ENCODE measurements at regions of chr13 and their contacts with region 1.

Region 1: DNA sequence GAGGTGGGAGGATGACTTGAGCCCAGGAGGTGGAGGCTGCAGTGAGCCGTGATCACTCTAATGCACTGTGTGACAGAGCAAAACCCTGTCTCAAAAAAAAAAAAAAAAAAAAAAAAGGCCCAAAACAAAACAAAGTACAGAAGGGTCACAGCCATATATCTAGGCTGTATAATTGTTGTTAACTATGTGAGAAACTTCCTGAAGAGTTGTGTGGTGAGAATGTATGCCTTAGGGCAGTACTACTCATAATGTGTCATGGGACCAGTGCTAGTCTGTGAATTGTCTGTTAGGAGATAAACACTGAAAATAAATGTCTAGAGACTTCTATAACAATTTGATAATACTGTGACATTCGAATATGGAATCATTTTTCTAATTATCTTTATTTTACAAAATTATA is 43.1 kb downstream of the PAN3 start:
- DNase-seq: peak in 1 of 2 experiments; percentile 92
- H3K4me3 ChIP-seq: no peak overlapping the region; the same call in 1 of the 2 replicates
- H3K27ac ChIP-seq: peak overlapping the region; percentile 83
- H3K4me1 ChIP-seq: peaks cover 47% of the 10 kb centered on the region
- H3K27me3 ChIP-seq: no peaks in the 10 kb centered on the region
- CTCF ChIP-seq: no peak

Region 2: GRCh38 chr13:28138012-28138755 is 43.2 kb before region 1 on chr13 and contains the start of gene PAN3:
- CTCF ChIA-PET with region 1: no interaction called
- POLR2A ChIA-PET with region 1: no interaction called
- intact Hi-C with region 1: loop called (anchors 2 kb)
- DNase-seq: peak; percentile 77 to 81
- H3K4me3 ChIP-seq: peak within 1 kb of the TSS; percentile 93
- H3K27ac ChIP-seq: peak within 1 kb of the TSS; percentile 78
- H3K4me1 ChIP-seq: peaks cover 35% of the 10 kb centered on the region
- H3K27me3 ChIP-seq: no peaks in the 10 kb centered on the region
- CTCF ChIP-seq: no peak
- total RNA-seq, gene PAN3: 29.2 and 34.6 TPM in 2 replicates

Region 3: DNA sequence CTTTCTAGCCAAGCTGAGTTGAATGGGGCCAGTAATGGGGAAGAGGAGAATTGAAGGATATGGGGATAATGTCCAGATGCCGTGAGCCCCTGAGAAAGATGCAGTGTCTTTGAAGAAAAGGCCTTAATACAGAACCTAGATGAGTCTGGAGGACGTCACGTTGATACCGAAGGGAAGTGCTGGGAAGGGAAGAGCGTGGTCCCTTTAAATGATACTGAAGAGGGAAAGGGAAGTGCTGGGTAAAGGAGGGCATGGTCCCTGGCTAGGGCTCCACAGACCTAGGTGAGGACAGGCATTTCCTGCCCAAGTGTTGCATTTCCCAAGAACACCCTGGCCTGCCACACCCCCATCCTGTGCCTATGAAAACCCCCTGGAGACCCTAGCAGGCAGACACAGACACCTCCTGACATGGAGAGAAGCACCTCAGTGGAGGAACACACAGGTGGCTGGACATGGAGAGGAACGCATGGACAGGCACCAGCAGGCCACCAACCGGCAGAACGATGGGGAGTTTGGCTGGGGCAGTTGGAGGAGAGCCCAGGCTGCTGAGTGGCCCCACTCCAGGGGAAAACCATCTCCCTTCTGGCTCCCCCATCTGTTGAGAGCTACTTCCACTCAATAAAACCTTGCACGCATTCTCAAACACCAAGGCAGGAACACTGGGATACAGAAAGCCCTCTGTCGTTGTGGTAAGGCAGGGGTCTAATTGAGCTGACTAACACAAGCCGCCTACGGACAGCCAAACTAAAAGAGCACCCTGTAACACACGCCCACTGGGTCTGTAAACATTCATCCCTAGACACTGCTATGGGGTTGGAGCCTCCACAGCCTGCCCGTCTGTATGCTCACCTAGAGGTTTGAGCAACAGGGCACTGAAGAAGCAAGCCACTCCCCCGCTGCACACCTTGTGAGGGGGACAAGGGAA is 442.6 kb after region 1 on chr13:
- CTCF ChIA-PET with region 1: no interaction called
- POLR2A ChIA-PET with region 1: no interaction called
- intact Hi-C with region 1: no loop called
- DNase-seq: no peak
- H3K4me3 ChIP-seq: no peak overlapping the region
- H3K27ac ChIP-seq: no peak overlapping the region
- H3K4me1 ChIP-seq: no peaks in the 10 kb centered on the region
- H3K27me3 ChIP-seq: peaks cover 59% of the 10 kb centered on the region
- CTCF ChIP-seq: no peak